ENCODE measurements at regions of chr4 and their contacts with region 1.

Region 1: GRCh38 chr4:31735004-31735403 is 1014.8 kb downstream of the PCDH7 start:
- DNase-seq: no peak
- H3K4me3 ChIP-seq: no peak overlapping the region
- H3K27ac ChIP-seq: no peak overlapping the region
- H3K4me1 ChIP-seq: no peaks in the 10 kb centered on the region
- CTCF ChIP-seq: no peak

Region 2: GRCh38 chr4:31592293-31592692 is 142.7 kb before region 1 on chr4:
- CTCF ChIA-PET with region 1: no interaction called
- POLR2A ChIA-PET with region 1: no interaction called
- intact Hi-C with region 1: no loop called
- DNase-seq: no peak
- H3K4me3 ChIP-seq: no peak overlapping the region
- H3K27ac ChIP-seq: no peak overlapping the region
- H3K4me1 ChIP-seq: no peaks in the 10 kb centered on the region
- CTCF ChIP-seq: no peak

Region 3: DNA sequence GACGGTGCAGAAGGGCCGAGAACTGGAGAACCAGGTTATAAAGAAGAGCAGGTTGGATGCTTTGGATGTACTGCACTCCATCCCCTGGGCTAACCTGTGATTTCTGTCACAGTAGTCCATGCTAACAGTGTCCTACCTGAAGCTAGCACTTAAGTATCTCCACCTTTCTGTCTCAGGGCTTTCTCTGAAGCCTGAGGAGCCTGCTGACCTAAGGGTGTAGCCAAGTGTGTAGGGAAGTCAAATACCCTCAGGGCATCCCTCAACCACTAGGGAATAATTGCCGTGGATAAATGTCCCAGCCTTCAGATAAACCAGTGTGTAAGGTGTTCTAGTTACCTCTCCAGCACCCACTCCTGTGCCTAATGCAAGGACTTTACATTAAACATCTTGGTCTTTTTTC is 26.8 kb after region 1 on chr4:
- CTCF ChIA-PET with region 1: no interaction called
- POLR2A ChIA-PET with region 1: interaction called, 10 read pairs
- intact Hi-C with region 1: no loop called
- DNase-seq: no peak
- H3K4me3 ChIP-seq: no peak overlapping the region
- H3K27ac ChIP-seq: no peak overlapping the region
- H3K4me1 ChIP-seq: no peaks in the 10 kb centered on the region
- CTCF ChIP-seq: no peak